ENCODE measurements at regions of chr20 and their contacts with region 1.

Region 1: DNA sequence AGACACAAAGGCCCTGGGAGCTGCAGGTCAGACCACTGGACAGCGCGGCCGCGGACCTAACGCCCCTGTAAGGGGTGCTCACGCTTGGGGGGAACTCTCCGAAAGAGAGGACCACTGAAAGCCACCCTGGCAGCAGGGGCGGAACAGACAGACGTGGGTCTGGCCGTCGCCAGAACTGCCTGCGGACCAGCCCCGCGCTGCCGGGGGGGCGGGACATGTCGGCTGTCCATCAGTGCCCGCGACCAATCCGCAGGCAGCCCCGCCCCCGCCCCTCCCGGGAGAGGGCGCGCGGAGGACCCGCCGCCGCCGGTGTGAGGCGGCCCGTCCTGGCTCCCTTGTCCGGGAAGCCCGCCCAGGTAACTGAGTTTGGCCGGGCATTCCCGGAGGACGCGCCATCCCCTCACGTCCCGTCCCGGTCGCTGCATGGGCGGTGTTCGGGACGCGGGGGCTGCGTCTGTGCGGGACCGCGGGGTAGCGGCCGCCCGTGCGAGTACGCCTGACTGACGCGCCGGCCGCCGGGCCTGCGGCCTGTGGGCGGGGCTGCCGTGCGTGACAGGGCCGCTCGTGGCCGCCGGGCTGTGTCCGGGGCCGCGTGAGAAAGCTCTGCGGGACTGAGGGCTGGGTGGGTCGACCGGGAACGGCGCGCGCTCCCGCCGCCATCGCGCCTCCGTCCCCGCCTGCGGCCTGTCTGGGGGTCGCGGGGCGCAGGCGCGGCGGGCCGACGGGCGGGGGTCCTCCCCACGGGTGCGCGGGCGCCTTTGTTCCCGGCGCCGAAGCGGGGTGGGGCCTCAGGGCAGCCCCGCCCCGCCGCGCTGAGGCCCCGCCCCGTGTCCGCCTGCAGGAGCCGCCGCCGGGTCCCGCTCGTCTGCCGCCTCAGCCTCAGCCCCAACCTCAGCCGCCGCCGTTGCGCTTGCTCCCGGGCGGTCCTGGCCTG is at the start of gene PLCG1:
- DNase-seq: peak; percentile 56 to 94
- H3K4me3 ChIP-seq: peak within 1 kb of the TSS; percentile 80 to 97 (median 90)
- H3K27ac ChIP-seq: peak within 1 kb of the TSS; percentile 93
- H3K4me1 ChIP-seq: peaks cover 25 to 40% (median 27%) of the 10 kb centered on the region in 4 experiments
- H3K27me3 ChIP-seq: peaks cover 0 to 9% (median 2%) of the 10 kb centered on the region in 4 experiments; a peak in 3 of 7 replicates
- CTCF ChIP-seq: no peak; a peak in 1 of 4 replicates
- EP300 ChIP-seq: no peak
- POLR2A ChIP-seq: peak; percentile 75 to 83
- RAD21 ChIP-seq: no peak
- total RNA-seq, gene PLCG1: 151 and 154 TPM in 2 replicates

Region 2: GRCh38 chr20:41119546-41120235 is 17.3 kb before region 1 on chr20:
- CTCF ChIA-PET with region 1: interaction called, 14 read pairs
- POLR2A ChIA-PET with region 1: interaction called, 6 read pairs
- DNase-seq: no peak
- H3K4me3 ChIP-seq: no peak overlapping the region
- H3K27ac ChIP-seq: no peak overlapping the region
- H3K4me1 ChIP-seq: no peaks in the 10 kb centered on the region
- H3K27me3 ChIP-seq: no peaks in the 10 kb centered on the region
- CTCF ChIP-seq: no peak
- EP300 ChIP-seq: no peak
- POLR2A ChIP-seq: no peak
- RAD21 ChIP-seq: no peak

Region 3: GRCh38 chr20:41149679-41150131 is 12.8 kb after region 1 on chr20:
- CTCF ChIA-PET with region 1: interaction called, 31 read pairs
- POLR2A ChIA-PET with region 1: interaction called, 14 read pairs
- DNase-seq: no peak
- H3K4me3 ChIP-seq: no peak overlapping the region
- H3K27ac ChIP-seq: no peak overlapping the region
- H3K4me1 ChIP-seq: peaks cover 0 to 14% (median 7%) of the 10 kb centered on the region in 4 experiments; a peak in 3 of 7 replicates
- H3K27me3 ChIP-seq: no peaks in the 10 kb centered on the region
- CTCF ChIP-seq: no peak
- EP300 ChIP-seq: no peak
- POLR2A ChIP-seq: no peak
- RAD21 ChIP-seq: no peak

Region 4: GRCh38 chr20:41167481-41168253 is 30.7 kb after region 1 on chr20:
- CTCF ChIA-PET with region 1: interaction called, 17 read pairs
- POLR2A ChIA-PET with region 1: interaction called, 5 read pairs
- DNase-seq: no peak
- H3K4me3 ChIP-seq: no peak overlapping the region
- H3K27ac ChIP-seq: no peak overlapping the region
- H3K4me1 ChIP-seq: no peaks in the 10 kb centered on the region; a peak in 1 of 7 replicates
- H3K27me3 ChIP-seq: no peaks in the 10 kb centered on the region
- CTCF ChIP-seq: no peak
- EP300 ChIP-seq: no peak
- POLR2A ChIP-seq: peak in 1 of 2 experiments; percentile 51; a peak in 1 of 3 replicates
- RAD21 ChIP-seq: no peak

Measured in H1 (cell line).